ENCODE measurements at regions of chr1 and their contacts with region 1.

Region 1: DNA sequence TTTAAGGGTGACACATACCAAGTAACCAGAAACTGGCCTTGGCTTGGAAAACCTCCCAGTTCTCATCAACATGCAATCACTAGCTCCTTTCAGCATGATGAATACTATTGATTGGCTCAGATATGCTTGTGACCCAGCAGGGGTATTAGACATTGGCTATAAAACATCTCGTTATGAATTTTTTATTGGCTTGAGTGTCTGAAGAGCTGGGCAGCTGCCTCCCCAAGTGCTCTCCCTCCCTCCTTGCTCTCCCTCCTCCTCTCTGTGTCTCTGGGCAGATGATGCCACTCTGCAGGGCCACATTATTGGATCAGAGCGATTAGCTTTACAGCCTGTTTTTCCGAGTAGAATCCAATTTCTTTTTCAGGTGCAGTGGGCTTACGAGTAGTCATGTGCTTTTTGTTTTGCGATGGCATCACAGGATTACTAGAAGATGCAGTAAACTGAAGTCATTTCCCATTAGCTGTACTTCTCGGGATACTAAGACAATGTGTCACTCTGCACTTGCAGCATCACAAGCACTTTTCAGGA is 79.3 kb upstream of the ATF3 start:
- DNase-seq: no peak
- H3K4me3 ChIP-seq: no peak overlapping the region
- H3K27ac ChIP-seq: no peak overlapping the region
- H3K4me1 ChIP-seq: no peaks in the 10 kb centered on the region
- H3K27me3 ChIP-seq: no peaks in the 10 kb centered on the region
- CTCF ChIP-seq: no peak
- EP300 ChIP-seq: no peak
- POLR2A ChIP-seq: no peak
- RAD21 ChIP-seq: no peak

Region 2: GRCh38 chr1:212514056-212514614 is 15.1 kb before region 1 on chr1:
- CTCF ChIA-PET with region 1: interaction called, 12 read pairs
- POLR2A ChIA-PET with region 1: interaction called, 4 read pairs
- DNase-seq: peak in 1 of 2 experiments; percentile 70
- H3K4me3 ChIP-seq: peak overlapping the region in 1 of 4 experiments; percentile 53; a peak in 2 of 8 replicates
- H3K27ac ChIP-seq: no peak overlapping the region
- H3K4me1 ChIP-seq: peaks cover 1 to 11% (median 7%) of the 10 kb centered on the region in 4 experiments
- H3K27me3 ChIP-seq: peaks cover 8 to 41% (median 29%) of the 10 kb centered on the region in 4 experiments
- CTCF ChIP-seq: no peak
- EP300 ChIP-seq: no peak
- POLR2A ChIP-seq: no peak
- RAD21 ChIP-seq: no peak

Region 3: DNA sequence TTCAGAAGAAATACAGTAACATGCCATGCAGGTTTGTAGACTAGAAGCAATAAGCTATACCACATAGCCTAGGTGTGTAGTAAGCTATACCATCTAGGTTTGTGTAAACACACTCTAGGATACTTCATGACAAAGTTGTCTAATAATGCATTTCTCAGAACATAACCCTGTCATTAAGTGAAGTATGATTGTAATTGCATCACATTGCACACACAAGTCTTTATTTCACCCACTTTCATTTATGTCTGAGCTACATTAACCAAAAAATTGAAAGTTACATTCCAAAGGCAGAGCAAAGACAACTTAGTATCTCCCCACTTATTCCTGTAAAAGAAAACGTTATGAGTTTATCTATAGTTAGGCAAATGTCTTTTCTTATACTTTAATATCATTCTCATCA is 14.8 kb after region 1 on chr1:
- CTCF ChIA-PET with region 1: no interaction called
- POLR2A ChIA-PET with region 1: no interaction called
- DNase-seq: no peak
- H3K4me3 ChIP-seq: no peak overlapping the region
- H3K27ac ChIP-seq: no peak overlapping the region
- H3K4me1 ChIP-seq: peaks cover 0 to 2% (median 0%) of the 10 kb centered on the region in 4 experiments; a peak in 3 of 7 replicates
- H3K27me3 ChIP-seq: no peaks in the 10 kb centered on the region; a peak in 1 of 7 replicates
- CTCF ChIP-seq: no peak
- EP300 ChIP-seq: no peak
- POLR2A ChIP-seq: no peak
- RAD21 ChIP-seq: no peak